Gastrocnemius medialis (tissue), 4 donors: ENCODE measurements at regions of chr1 and their contacts with region 1.

Region 1: GRCh38 chr1:236103646-236104218 is 38.6 kb upstream of the GPR137B start:
- DNase-seq: no peak
- ATAC-seq: peak in 1 of 2 donors; percentile 49
- H3K4me3 ChIP-seq: no peak overlapping the region
- H3K27ac ChIP-seq: no peak overlapping the region
- H3K4me1 ChIP-seq: no peaks in the 10 kb centered on the region
- H3K27me3 ChIP-seq: peaks cover 0 to 8% (median 0%) of the 10 kb centered on the region in 3 donors
- CTCF ChIP-seq: peak; percentile 66 to 86 (median 72)
- POLR2A ChIP-seq: no peak

Region 2: DNA sequence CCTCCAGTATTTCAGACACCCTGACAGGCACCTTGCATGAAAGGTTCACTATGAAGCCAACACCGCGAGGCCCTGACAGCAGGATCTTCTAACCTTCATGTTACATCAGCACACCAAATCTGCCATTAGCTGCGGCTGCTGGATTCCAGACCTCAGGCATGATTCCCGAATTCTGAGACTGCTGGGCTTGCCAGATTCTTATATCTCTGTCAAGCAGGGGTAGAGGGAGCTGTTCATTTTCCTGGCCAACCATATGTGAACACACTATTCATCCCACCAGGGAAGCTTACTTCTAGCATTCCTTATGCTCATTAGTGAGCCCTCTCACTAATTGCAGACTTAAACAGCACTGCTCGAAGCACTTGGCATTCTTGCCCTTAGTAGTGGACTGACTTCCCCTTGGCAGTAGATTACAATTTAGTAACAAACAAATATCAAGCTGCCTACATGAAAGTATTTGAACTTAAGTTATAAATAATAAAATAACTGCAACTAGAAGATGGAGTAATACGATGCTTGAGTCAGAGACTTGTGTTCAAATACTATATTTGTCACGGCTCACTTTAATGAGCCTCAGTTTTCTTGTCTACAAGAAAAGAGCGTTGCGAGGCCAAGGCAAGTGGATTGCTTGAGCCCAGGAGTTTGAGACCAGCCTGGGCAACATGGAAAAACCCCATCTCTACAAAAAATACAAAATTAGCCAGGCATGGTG is 82.2 kb before region 1 on chr1:
- in situ Hi-C with region 1: no loop called
- intact Hi-C with region 1: no loop called
- DNase-seq: no peak
- ATAC-seq: no peak
- H3K4me3 ChIP-seq: no peak overlapping the region
- H3K27ac ChIP-seq: peak overlapping the region; percentile 72 to 79 (median 76)
- H3K4me1 ChIP-seq: peaks cover 8 to 23% of the 10 kb centered on the region in 2 donors
- H3K27me3 ChIP-seq: no peaks in the 10 kb centered on the region
- CTCF ChIP-seq: no peak
- POLR2A ChIP-seq: no peak

Region 3: GRCh38 chr1:236489710-236490377 is 386.1 kb after region 1 on chr1:
- in situ Hi-C with region 1: loop called in 2 of 4 experiments (anchors 5 to 10 kb)
- intact Hi-C with region 1: no loop called
- DNase-seq: no peak
- ATAC-seq: no peak
- H3K4me3 ChIP-seq: no peak overlapping the region
- H3K27ac ChIP-seq: no peak overlapping the region
- H3K4me1 ChIP-seq: no peaks in the 10 kb centered on the region
- H3K27me3 ChIP-seq: no peaks in the 10 kb centered on the region
- CTCF ChIP-seq: peak in 4 of 5 experiments; percentile 41 to 57 (median 44)
- POLR2A ChIP-seq: no peak

Region 4: DNA sequence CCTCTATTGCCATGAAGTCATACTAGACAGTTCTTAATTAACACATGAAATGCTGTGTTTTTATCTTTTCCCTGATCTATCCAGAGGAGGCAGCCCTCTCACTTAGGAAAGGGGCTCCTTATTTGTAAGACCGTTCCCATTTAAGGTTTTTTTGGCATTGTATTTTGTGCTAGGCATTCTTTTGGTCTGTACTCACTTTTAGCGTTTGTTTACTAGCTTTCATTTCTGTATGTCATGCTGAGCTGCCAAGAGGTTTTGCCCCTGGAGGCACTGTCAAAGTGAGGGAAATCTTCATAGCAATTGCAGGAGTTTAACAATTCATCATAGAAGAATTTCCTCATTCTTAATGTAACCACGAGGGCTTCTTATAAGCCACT is 750.9 kb after region 1 on chr1:
- in situ Hi-C with region 1: loop called in 2 of 4 experiments (anchors 25 kb)
- intact Hi-C with region 1: loop called (anchors 10 kb)
- DNase-seq: no peak
- ATAC-seq: no peak
- H3K4me3 ChIP-seq: no peak overlapping the region
- H3K27ac ChIP-seq: no peak overlapping the region
- H3K4me1 ChIP-seq: no peaks in the 10 kb centered on the region
- H3K27me3 ChIP-seq: no peaks in the 10 kb centered on the region
- CTCF ChIP-seq: no peak
- POLR2A ChIP-seq: no peak

Region 5: GRCh38 chr1:236868625-236869467 is 765.1 kb after region 1 on chr1:
- in situ Hi-C with region 1: loop called in 2 of 4 experiments (anchors 25 kb)
- intact Hi-C with region 1: no loop called
- DNase-seq: no peak
- ATAC-seq: peak in 1 of 2 donors; percentile 64
- H3K4me3 ChIP-seq: no peak overlapping the region
- H3K27ac ChIP-seq: no peak overlapping the region
- H3K4me1 ChIP-seq: peaks cover 0 to 12% of the 10 kb centered on the region in 2 donors
- H3K27me3 ChIP-seq: no peaks in the 10 kb centered on the region
- CTCF ChIP-seq: peak; percentile 57 to 77 (median 67)
- POLR2A ChIP-seq: no peak

Region 6: GRCh38 chr1:237562242-237562823 is 1458.6 kb after region 1 on chr1:
- in situ Hi-C with region 1: loop called in 1 of 4 experiments (anchors 25 kb)
- intact Hi-C with region 1: no loop called
- DNase-seq: no peak
- ATAC-seq: no peak
- H3K4me3 ChIP-seq: no peak overlapping the region
- H3K27ac ChIP-seq: no peak overlapping the region
- H3K4me1 ChIP-seq: no peaks in the 10 kb centered on the region
- H3K27me3 ChIP-seq: no peaks in the 10 kb centered on the region
- CTCF ChIP-seq: peak in 2 of 5 experiments; percentile 21 to 50
- POLR2A ChIP-seq: no peak